Heart left ventricle (tissue), 16 donors: ENCODE measurements at regions of chr9 and their contacts with region 1.

Region 1: GRCh38 chr9:33159760-33160127 is 7.4 kb downstream of the B4GALT1 start:
- DNase-seq: peak; percentile 55 to 72 (median 64)
- ATAC-seq: peak in 3 of 4 donors; percentile 2 to 35 (median 2)
- H3K4me3 ChIP-seq: peak overlapping the region in 8 of 12 donors; percentile 4 to 33 (median 16)
- H3K27ac ChIP-seq: peak overlapping the region; percentile 96 to 100 (median 99)
- H3K4me1 ChIP-seq: peaks cover 49 to 100% (median 93%) of the 10 kb centered on the region in 12 donors
- H3K27me3 ChIP-seq: no peaks in the 10 kb centered on the region
- CTCF ChIP-seq: no peak
- POLR2A ChIP-seq: no peak

Region 2: DNA sequence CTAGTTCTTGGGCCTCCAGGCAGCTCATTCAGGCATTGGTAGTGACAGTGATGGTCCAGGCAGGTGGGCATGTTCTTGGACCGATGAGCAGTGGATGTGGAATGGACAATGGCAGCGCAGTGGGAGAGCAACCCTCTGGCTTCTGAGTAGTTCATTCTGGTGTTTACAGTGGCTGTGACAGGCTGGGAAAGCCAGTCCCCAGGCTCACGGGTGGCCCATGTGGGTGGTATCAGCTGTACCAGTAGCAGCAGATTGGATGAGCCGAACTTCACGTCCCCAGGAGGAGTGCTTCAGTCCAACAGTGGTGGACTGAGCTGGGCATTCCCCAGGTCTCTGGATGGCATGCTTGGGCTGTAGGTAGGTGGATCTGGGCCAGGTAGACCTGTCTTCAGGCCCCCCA is 1290.9 kb before region 1 on chr9:
- intact Hi-C with region 1: no loop called
- DNase-seq: no peak
- ATAC-seq: no peak
- H3K4me3 ChIP-seq: no peak overlapping the region
- H3K27ac ChIP-seq: no peak overlapping the region
- H3K4me1 ChIP-seq: no peaks in the 10 kb centered on the region
- H3K27me3 ChIP-seq: no peaks in the 10 kb centered on the region
- CTCF ChIP-seq: no peak
- POLR2A ChIP-seq: no peak

Region 3: DNA sequence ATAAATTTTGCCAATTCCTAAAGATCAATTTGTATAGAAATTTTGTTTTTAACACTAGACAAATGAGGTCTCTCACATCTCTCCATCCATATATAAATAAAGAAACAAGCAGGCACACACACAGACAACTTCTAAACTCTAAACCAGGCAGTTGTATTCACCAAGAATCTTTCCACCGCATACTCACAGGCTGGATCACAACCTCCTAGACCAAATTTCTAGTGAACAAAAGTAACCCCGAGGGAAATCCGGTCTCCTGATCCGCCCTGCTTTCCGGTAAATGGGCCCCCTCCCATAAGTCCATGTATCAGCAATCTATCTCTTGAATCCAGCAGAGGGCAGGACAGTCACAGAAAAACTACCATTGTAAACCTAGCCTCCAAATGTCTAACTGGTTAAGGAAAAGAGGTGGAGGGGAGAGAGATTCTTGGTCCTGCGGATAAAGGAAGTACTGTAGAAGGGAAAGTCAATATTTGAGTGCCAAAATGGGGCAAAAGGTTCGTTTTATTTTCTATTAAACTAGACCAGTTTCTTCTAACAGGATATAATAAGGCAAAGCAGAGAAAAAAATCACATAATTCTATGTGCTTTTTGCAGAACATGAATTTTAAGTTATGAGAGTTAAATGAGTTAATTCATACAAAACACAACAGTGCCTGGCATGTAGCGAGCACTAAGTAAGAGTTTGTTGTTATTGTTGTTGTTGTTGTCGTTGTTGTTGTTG is 78.5 kb before region 1 on chr9:
- intact Hi-C with region 1: loop called in 1 of 10 experiments (anchors 2 kb)
- DNase-seq: peak in 4 of 5 donors; percentile 58 to 75 (median 64)
- ATAC-seq: peak in 3 of 4 donors; percentile 62 to 68 (median 62)
- H3K4me3 ChIP-seq: peak overlapping the region in 2 of 12 donors; percentile 11 to 37
- H3K27ac ChIP-seq: peak overlapping the region in 9 of 12 donors; percentile 9 to 81 (median 44)
- H3K4me1 ChIP-seq: peaks cover 0 to 29% (median 7%) of the 10 kb centered on the region in 12 donors
- H3K27me3 ChIP-seq: no peaks in the 10 kb centered on the region
- CTCF ChIP-seq: peak; percentile 60 to 85 (median 78)
- POLR2A ChIP-seq: no peak

Region 4: GRCh38 chr9:33092634-33093033 is 67.1 kb before region 1 on chr9:
- intact Hi-C with region 1: no loop called
- DNase-seq: no peak
- ATAC-seq: no peak
- H3K4me3 ChIP-seq: no peak overlapping the region
- H3K27ac ChIP-seq: no peak overlapping the region
- H3K4me1 ChIP-seq: no peaks in the 10 kb centered on the region
- H3K27me3 ChIP-seq: no peaks in the 10 kb centered on the region
- CTCF ChIP-seq: no peak
- POLR2A ChIP-seq: no peak

Region 5: DNA sequence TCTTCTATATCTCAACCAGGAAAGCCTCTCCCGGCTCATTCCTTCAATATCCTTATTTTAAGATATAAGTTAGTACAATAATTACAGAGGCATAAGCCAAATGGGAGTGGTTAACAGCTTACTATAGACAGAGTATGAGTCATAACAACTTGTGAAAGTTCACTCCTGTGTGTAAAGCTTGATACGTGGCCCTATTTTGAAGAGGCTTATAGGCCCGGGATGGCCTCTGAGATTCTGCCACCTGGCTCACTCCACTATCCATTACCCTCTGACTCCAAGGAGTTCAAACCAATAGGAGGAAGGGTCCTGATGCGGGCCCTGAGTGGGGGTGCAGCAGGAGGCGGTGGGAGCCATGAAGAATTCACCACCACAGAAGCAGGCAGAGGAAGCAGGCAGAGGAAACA is 29.2 kb before region 1 on chr9:
- intact Hi-C with region 1: loop called in 2 of 10 experiments (anchors 5 kb)
- DNase-seq: no peak
- ATAC-seq: peak in 3 of 4 donors; percentile 8 to 46 (median 41)
- H3K4me3 ChIP-seq: no peak overlapping the region
- H3K27ac ChIP-seq: peak overlapping the region in 7 of 12 donors; percentile 20 to 45 (median 43)
- H3K4me1 ChIP-seq: peaks cover 22 to 87% (median 72%) of the 10 kb centered on the region in 12 donors
- H3K27me3 ChIP-seq: no peaks in the 10 kb centered on the region
- CTCF ChIP-seq: no peak
- POLR2A ChIP-seq: no peak

Region 6: GRCh38 chr9:33139421-33140228 is 20.1 kb before region 1 on chr9:
- intact Hi-C with region 1: loop called in 2 of 10 experiments (anchors 2 kb)
- DNase-seq: peak; percentile 83 to 91 (median 88)
- ATAC-seq: peak; percentile 65 to 83 (median 80)
- H3K4me3 ChIP-seq: peak overlapping the region in 3 of 12 donors; percentile 0 to 11 (median 7)
- H3K27ac ChIP-seq: peak overlapping the region; percentile 38 to 84 (median 76)
- H3K4me1 ChIP-seq: peaks cover 35 to 100% (median 97%) of the 10 kb centered on the region in 12 donors
- H3K27me3 ChIP-seq: no peaks in the 10 kb centered on the region
- CTCF ChIP-seq: no peak
- POLR2A ChIP-seq: no peak

Region 7: GRCh38 chr9:33202552-33203201 is 42.9 kb after region 1 on chr9:
- intact Hi-C with region 1: no loop called
- DNase-seq: peak; percentile 67 to 82 (median 77)
- ATAC-seq: peak; percentile 68 to 89 (median 86)
- H3K4me3 ChIP-seq: no peak overlapping the region
- H3K27ac ChIP-seq: peak overlapping the region in 10 of 12 donors; percentile 22 to 66 (median 48)
- H3K4me1 ChIP-seq: peaks cover 0 to 18% (median 4%) of the 10 kb centered on the region in 12 donors
- H3K27me3 ChIP-seq: no peaks in the 10 kb centered on the region
- CTCF ChIP-seq: no peak
- POLR2A ChIP-seq: no peak